ENCODE measurements at regions of chr5 and their contacts with region 1.

Region 1: DNA sequence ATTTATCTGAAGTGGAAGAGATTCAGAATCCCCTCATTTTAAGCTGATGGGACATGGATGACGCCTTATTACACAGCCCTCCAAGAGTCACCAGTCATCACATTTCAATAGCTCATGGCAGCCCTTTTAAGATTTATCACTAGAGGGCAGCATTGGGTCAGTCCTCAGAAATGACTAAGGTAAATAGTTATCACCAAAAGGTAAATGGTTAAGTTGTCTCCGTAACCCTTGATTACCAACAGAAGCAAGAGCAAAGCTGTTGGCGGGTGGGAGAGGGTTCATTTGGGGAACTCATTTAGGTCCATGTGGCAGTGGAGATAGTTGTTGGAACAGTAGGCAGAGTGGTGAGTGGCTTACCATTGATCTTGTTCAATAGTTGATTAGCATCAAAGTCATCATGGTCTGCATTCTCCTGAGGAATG is 12.0 kb upstream of the C9 start:
- DNase-seq: peak; percentile 50
- H3K4me3 ChIP-seq: no peak overlapping the region
- H3K27ac ChIP-seq: no peak overlapping the region
- H3K4me1 ChIP-seq: no peaks in the 10 kb centered on the region
- CTCF ChIP-seq: peak; percentile 83

Region 2: GRCh38 chr5:39547553-39548154 is 171.3 kb after region 1 on chr5:
- CTCF ChIA-PET with region 1: interaction called, 10 read pairs
- POLR2A ChIA-PET with region 1: interaction called, 3 read pairs
- intact Hi-C with region 1: loop called (anchors 2 kb)
- DNase-seq: peak; percentile 38
- H3K4me3 ChIP-seq: no peak overlapping the region
- H3K27ac ChIP-seq: no peak overlapping the region
- H3K4me1 ChIP-seq: no peaks in the 10 kb centered on the region
- CTCF ChIP-seq: peak; percentile 86

Measured in OCI-LY7 (cell line).